Calu3 (cell line): ENCODE measurements at regions of chr4 and their contacts with region 1.

Region 1: GRCh38 chr4:99808260-99808857 is 8.3 kb upstream of the DAPP1 start:
- DNase-seq: peak; percentile 70
- H3K4me3 Mint-ChIP-seq: no peak overlapping the region
- H3K27ac Mint-ChIP-seq: no peak overlapping the region
- H3K4me1 Mint-ChIP-seq: no peaks in the 10 kb centered on the region
- H3K27me3 Mint-ChIP-seq: no peaks in the 10 kb centered on the region
- CTCF ChIP-seq: peak; percentile 68

Region 2: GRCh38 chr4:99471349-99471748 is 337.0 kb before region 1 on chr4:
- CTCF ChIA-PET with region 1: no interaction called
- intact Hi-C with region 1: loop called (anchors 2 kb)
- DNase-seq: no peak
- H3K4me3 Mint-ChIP-seq: no peak overlapping the region
- H3K27ac Mint-ChIP-seq: no peak overlapping the region
- H3K4me1 Mint-ChIP-seq: peaks cover 8% of the 10 kb centered on the region
- H3K27me3 Mint-ChIP-seq: no peaks in the 10 kb centered on the region
- CTCF ChIP-seq: no peak

Region 3: GRCh38 chr4:99642725-99643489 is 165.5 kb before region 1 on chr4:
- CTCF ChIA-PET with region 1: no interaction called
- intact Hi-C with region 1: loop called (anchors 5 kb)
- DNase-seq: no peak
- H3K4me3 Mint-ChIP-seq: peak overlapping the region; percentile 49
- H3K27ac Mint-ChIP-seq: no peak overlapping the region
- H3K4me1 Mint-ChIP-seq: peaks cover 39% of the 10 kb centered on the region
- H3K27me3 Mint-ChIP-seq: no peaks in the 10 kb centered on the region
- CTCF ChIP-seq: no peak

Region 4: GRCh38 chr4:99723612-99724011 is 84.7 kb before region 1 on chr4:
- CTCF ChIA-PET with region 1: interaction called, 3 read pairs
- intact Hi-C with region 1: loop called (anchors 10 kb)
- DNase-seq: peak; percentile 31
- H3K4me3 Mint-ChIP-seq: no peak overlapping the region
- H3K27ac Mint-ChIP-seq: no peak overlapping the region
- H3K4me1 Mint-ChIP-seq: peaks cover 10% of the 10 kb centered on the region
- H3K27me3 Mint-ChIP-seq: no peaks in the 10 kb centered on the region
- CTCF ChIP-seq: no peak

Region 5: DNA sequence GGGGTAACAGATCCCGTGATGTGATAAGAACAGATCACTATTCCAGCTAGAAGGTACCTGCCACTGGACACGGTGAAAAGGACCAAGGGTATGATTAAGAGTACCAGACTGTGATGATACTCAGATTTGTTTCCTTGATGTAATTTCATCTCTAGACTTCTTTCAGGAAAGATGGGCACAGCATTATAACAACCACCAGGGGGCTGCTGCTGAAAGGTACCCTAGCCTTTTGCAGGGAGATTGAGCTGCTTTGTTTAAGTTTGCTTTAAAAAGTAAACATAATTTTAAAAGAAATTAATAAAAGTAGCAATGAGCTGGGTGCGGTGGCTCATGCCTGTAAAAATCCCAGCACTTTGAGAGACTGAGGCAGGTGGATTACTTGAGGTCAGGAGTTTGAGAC is 564.1 kb after region 1 on chr4:
- CTCF ChIA-PET with region 1: no interaction called
- intact Hi-C with region 1: no loop called
- DNase-seq: peak; percentile 4
- H3K4me3 Mint-ChIP-seq: no peak overlapping the region
- H3K27ac Mint-ChIP-seq: no peak overlapping the region
- H3K4me1 Mint-ChIP-seq: no peaks in the 10 kb centered on the region
- H3K27me3 Mint-ChIP-seq: no peaks in the 10 kb centered on the region
- CTCF ChIP-seq: no peak